Uterus (tissue), 4 donors: ENCODE measurements at regions of chr2 and their contacts with region 1.

Region 1: GRCh38 chr2:27281855-27282559 is at the start of gene TRIM54:
- DNase-seq: no peak
- H3K4me3 ChIP-seq: no peak within 1 kb of the TSS
- H3K27ac ChIP-seq: no peak within 1 kb of the TSS
- H3K4me1 ChIP-seq: no peaks in the 10 kb centered on the region
- H3K27me3 ChIP-seq: no peaks in the 10 kb centered on the region
- CTCF ChIP-seq: no peak
- POLR2A ChIP-seq: no peak
- total RNA-seq, gene TRIM54: 0.26 to 5.0 (median 0.58) TPM

Region 2: DNA sequence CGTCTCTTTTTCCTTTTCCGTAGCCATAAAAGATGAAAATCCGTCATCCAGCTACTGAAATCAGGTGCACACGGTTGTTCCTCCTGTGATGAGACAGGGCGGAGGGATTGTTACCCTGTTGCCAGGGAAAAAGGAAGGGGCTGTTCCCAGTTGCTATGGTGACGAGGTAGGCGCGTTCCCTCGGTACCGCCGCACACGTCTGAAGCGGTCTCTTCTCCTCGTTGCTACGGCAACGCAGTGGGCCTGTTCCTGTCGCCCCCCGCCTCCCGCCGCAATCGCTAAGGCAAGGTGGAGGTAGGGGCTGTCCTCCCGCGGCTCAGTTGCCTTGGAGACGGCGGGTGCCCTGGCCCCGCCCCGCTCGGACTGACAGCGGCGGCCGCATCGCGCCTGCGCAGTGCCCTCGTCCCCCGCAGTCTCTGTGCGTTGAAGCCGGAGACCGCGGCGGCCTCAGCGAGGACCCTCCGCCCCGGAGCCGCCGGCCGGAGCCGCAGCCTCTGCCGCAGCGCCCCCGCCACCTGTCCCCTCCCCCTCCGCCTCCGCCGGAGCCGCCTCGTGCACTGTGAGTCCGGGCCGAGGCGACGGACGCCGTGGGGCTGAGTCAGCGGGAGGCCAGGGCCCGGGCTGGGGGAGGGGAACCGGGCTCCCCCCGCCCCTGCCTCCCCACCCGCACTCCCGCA is 311.6 kb before region 1 on chr2 and contains the start of gene MAPRE3:
- intact Hi-C with region 1: no loop called
- DNase-seq: peak; percentile 76 to 84
- H3K4me3 ChIP-seq: peak within 1 kb of the TSS; percentile 73 to 86
- H3K27ac ChIP-seq: peak within 1 kb of the TSS; percentile 77 to 91
- H3K4me1 ChIP-seq: peaks cover 0 to 6% of the 10 kb centered on the region in 2 donors
- H3K27me3 ChIP-seq: no peaks in the 10 kb centered on the region
- CTCF ChIP-seq: peak in 1 of 4 experiments; percentile 3
- POLR2A ChIP-seq: peak in 1 of 2 donors; percentile 65
- total RNA-seq, gene MAPRE3: 2.9 to 49.6 (median 4.9) TPM

Region 3: GRCh38 chr2:27102329-27102728 is 179.7 kb before region 1 on chr2:
- intact Hi-C with region 1: loop called (anchors 10 kb)
- DNase-seq: no peak
- H3K4me3 ChIP-seq: no peak overlapping the region
- H3K27ac ChIP-seq: no peak overlapping the region
- H3K4me1 ChIP-seq: no peaks in the 10 kb centered on the region
- H3K27me3 ChIP-seq: no peaks in the 10 kb centered on the region
- CTCF ChIP-seq: no peak
- POLR2A ChIP-seq: no peak